Gastrocnemius medialis (tissue), 4 donors: ENCODE measurements at regions of chr7 and their contacts with region 1.

Region 1: GRCh38 chr7:39633563-39634477 is 10.4 kb downstream of the RALA start:
- DNase-seq: no peak
- ATAC-seq: peak; percentile 62 to 72
- H3K4me3 ChIP-seq: no peak overlapping the region
- H3K27ac ChIP-seq: no peak overlapping the region
- H3K4me1 ChIP-seq: peaks cover 30 to 32% of the 10 kb centered on the region in 2 donors
- H3K27me3 ChIP-seq: no peaks in the 10 kb centered on the region
- CTCF ChIP-seq: no peak
- POLR2A ChIP-seq: no peak

Region 2: DNA sequence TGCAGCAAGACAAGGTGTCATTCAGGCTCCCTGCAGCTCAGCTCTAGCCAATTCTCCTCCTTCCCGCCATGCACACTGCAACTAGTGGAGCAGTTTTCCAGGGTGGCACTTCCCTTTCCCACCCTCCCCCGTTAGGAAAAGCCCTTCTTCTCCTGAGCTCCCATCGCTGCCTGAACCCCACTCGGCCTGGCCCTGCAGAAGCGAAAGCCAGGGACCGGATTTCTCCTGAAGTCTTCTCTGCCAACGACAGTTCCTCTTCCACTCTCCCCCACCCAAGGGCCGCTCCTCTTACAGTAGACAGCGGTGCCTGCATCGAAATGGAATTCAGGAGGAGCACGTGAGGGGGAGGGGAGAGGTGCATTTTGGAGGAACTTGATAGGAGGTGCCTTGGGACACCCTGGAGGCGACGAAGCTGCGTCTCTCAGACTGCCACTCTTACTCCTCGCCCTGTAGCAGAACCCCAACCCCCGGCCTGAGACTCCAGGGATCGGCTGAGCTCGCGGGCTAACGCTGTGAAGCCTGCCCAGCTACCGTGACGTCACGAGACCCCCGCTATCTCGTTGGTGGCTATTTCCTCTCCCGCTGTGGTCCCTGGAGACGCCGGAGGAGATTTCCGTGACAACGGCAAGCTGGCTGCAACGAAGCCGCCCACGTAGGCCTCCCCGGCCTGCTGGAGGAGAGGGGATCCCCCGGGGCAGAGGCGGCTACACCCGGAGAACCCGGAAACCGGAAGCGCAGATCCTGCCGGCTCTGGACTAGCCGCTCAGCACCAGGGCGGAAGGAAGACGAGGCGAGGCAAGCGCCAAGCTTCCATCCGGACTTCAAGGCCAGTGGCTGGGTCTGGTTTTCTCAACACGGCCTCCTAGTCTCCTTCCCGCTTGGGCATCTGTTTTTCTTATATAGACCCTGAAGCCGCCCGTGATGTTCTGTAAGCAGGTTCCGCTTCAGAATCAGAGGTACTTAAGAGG is 99.3 kb after region 1 on chr7:
- in situ Hi-C with region 1: loop called in 1 of 4 experiments (anchors 5 kb)
- intact Hi-C with region 1: no loop called
- DNase-seq: peak; percentile 82 to 84
- ATAC-seq: peak; percentile 94 to 97
- H3K4me3 ChIP-seq: peak overlapping the region; percentile 57 to 66 (median 64)
- H3K27ac ChIP-seq: peak overlapping the region; percentile 41 to 66 (median 55)
- H3K4me1 ChIP-seq: peaks cover 13 to 14% of the 10 kb centered on the region in 2 donors
- H3K27me3 ChIP-seq: no peaks in the 10 kb centered on the region
- CTCF ChIP-seq: no peak
- POLR2A ChIP-seq: no peak